Naive thymus-derived CD4-positive, alpha-beta T cell (primary cell): ENCODE measurements at regions of chr7 and their contacts with region 1.

Region 1: DNA sequence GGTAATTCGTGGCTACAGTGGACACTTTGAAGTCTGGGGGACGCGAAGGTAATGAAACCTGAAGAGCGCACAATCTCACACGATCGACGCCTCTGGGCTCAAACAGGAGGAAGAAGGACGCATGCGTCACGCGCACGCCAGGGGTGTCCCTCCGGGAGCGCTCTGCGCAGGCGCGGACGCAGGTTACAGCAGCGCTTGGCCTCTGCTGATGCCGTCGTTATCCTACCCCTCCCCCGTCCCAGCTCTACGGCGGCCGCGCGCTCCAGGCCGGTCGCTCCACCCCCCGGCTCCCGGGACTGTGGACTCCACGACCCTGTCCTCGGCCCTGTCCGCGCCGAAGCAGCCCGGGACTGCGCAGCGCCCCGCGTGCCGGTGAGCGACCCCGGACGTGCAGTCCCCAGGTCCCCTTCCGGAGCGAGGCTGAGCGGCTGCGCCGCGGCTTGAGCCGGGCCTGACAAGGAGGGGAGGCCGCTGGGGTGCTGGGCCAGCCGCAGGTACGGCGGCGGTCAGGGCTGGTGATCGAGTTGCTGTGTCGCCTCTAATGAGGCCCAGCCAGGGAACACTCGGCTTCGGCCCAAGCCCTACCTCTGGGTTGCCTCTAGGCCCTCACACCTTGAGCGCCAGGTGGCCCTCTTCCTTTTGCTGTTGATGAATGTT is at the start of gene TMEM106B:
- DNase-seq: peak; percentile 93 to 97 (median 96)
- ATAC-seq: peak; percentile 94
- H3K4me3 ChIP-seq: peak within 1 kb of the TSS; percentile 78
- H3K4me3 Mint-ChIP-seq: peak within 1 kb of the TSS; percentile 87 to 98 (median 97)
- H3K27ac ChIP-seq: peak within 1 kb of the TSS; percentile 97
- H3K27ac Mint-ChIP-seq: peak within 1 kb of the TSS; percentile 95 to 100 (median 99)
- H3K4me1 ChIP-seq: peaks cover 12 to 22% of the 10 kb centered on the region in 2 donors
- H3K4me1 Mint-ChIP-seq: peaks cover 25 to 56% (median 41%) of the 10 kb centered on the region in 7 donors
- H3K27me3 ChIP-seq: no peaks in the 10 kb centered on the region
- H3K27me3 Mint-ChIP-seq: peaks cover 0 to 35% (median 0%) of the 10 kb centered on the region in 5 donors
- total RNA-seq, gene TMEM106B: 22.8 to 69.2 (median 40.1) TPM

Region 2: DNA sequence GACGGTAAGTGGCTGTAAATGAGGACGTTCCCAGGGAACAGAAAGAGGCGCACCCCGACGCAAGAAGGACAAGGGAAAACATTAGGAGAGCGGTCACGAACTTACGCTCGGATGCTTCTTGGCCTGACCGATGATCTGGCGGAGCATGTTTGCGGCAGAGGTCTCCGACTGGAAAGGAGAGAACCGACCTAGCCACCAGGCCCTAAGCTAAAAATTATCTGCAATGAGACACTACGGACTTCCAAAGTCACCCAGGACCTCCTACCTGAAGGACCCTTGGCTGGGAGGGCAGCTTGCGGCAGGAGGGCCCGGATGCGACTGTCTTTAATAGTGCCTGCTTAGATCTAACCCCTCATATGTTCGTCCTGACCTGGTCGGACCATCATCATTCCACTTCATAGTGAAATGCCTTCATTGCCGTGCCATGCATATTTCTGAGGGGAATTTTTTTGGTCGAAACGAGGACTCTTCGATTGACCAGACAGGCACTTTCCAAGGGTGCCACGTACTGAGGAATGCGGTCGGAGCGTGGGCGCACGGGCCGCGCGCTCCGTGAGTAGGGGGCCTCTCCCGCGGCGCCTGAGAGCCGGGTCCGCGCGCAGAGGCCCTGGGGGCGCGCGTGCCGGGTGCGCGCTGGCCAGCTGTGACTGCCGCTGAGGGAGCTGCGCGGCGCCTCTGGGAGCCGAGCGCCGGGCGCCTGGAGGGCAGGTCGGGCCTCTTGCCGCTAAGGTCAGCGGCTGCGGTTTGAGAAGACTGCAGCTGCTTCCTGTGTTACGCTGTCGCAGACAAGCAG is 1271.1 kb before region 1 on chr7:
- CTCF ChIA-PET with region 1: no interaction called
- POLR2A ChIA-PET with region 1: interaction called, 3 read pairs
- intact Hi-C with region 1: loop called in 1 of 2 experiments (anchors 1 kb)
- DNase-seq: peak; percentile 86 to 95 (median 90)
- ATAC-seq: peak; percentile 94
- H3K4me3 ChIP-seq: peak overlapping the region; percentile 83
- H3K4me3 Mint-ChIP-seq: no peak overlapping the region
- H3K27ac ChIP-seq: peak overlapping the region; percentile 91
- H3K27ac Mint-ChIP-seq: no peak overlapping the region
- H3K4me1 ChIP-seq: peaks cover 0 to 7% of the 10 kb centered on the region in 2 donors
- H3K4me1 Mint-ChIP-seq: peaks cover 8 to 50% (median 32%) of the 10 kb centered on the region in 7 donors
- H3K27me3 ChIP-seq: no peaks in the 10 kb centered on the region
- H3K27me3 Mint-ChIP-seq: no peaks in the 10 kb centered on the region

Region 3: GRCh38 chr7:12174931-12175330 is 36.3 kb before region 1 on chr7:
- CTCF ChIA-PET with region 1: no interaction called
- POLR2A ChIA-PET with region 1: interaction called, 24 read pairs
- intact Hi-C with region 1: loop called (anchors 1 kb)
- DNase-seq: no peak
- ATAC-seq: no peak
- H3K4me3 ChIP-seq: no peak overlapping the region
- H3K4me3 Mint-ChIP-seq: no peak overlapping the region
- H3K27ac ChIP-seq: no peak overlapping the region
- H3K27ac Mint-ChIP-seq: no peak overlapping the region
- H3K4me1 ChIP-seq: peaks cover 11 to 12% of the 10 kb centered on the region in 2 donors
- H3K4me1 Mint-ChIP-seq: peaks cover under 1 to 25% (median 19%) of the 10 kb centered on the region in 7 donors
- H3K27me3 ChIP-seq: no peaks in the 10 kb centered on the region
- H3K27me3 Mint-ChIP-seq: peaks cover 0 to 31% (median 0%) of the 10 kb centered on the region in 5 donors

Region 4: DNA sequence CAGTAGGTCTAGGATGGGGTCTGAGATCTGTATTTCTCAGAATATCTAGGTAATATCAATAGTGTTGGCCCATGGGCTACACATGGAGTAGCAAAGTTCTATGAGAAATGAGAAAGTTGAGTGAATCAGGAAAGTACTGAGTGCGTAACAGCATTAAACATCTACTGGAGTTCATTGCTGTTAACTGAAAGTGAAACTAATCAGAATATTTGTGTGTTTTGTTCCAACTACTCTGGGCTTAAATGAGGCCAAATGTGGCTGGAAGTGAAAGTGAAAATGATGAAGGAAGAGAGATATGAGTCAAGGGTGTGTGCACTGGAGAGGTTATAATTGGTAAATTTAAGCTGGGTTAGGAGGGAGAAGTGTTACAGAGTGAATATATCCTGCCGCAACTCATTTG is 46.4 kb after region 1 on chr7:
- CTCF ChIA-PET with region 1: interaction called, 6 read pairs
- POLR2A ChIA-PET with region 1: interaction called, 20 read pairs
- intact Hi-C with region 1: loop called (anchors 1 kb)
- DNase-seq: peak in 8 of 9 donors; percentile 31 to 80 (median 72)
- ATAC-seq: peak; percentile 97
- H3K4me3 ChIP-seq: peak overlapping the region; percentile 26
- H3K4me3 Mint-ChIP-seq: no peak overlapping the region
- H3K27ac ChIP-seq: peak overlapping the region; percentile 28
- H3K27ac Mint-ChIP-seq: no peak overlapping the region
- H3K4me1 ChIP-seq: peaks cover 23% of the 10 kb centered on the region in 2 donors
- H3K4me1 Mint-ChIP-seq: peaks cover 0 to 12% (median 9%) of the 10 kb centered on the region in 7 donors
- H3K27me3 ChIP-seq: no peaks in the 10 kb centered on the region
- H3K27me3 Mint-ChIP-seq: peaks cover 0 to 3% (median 0%) of the 10 kb centered on the region in 5 donors

Region 5: GRCh38 chr7:12389089-12389700 is 178.0 kb after region 1 on chr7:
- CTCF ChIA-PET with region 1: no interaction called
- POLR2A ChIA-PET with region 1: no interaction called
- intact Hi-C with region 1: loop called in 1 of 2 experiments (anchors 5 kb)
- DNase-seq: peak in 7 of 9 donors; percentile 7 to 47 (median 26)
- ATAC-seq: peak; percentile 81
- H3K4me3 ChIP-seq: no peak overlapping the region
- H3K4me3 Mint-ChIP-seq: no peak overlapping the region
- H3K27ac ChIP-seq: no peak overlapping the region
- H3K27ac Mint-ChIP-seq: no peak overlapping the region
- H3K4me1 ChIP-seq: no peaks in the 10 kb centered on the region
- H3K4me1 Mint-ChIP-seq: no peaks in the 10 kb centered on the region
- H3K27me3 ChIP-seq: no peaks in the 10 kb centered on the region
- H3K27me3 Mint-ChIP-seq: no peaks in the 10 kb centered on the region

Region 6: DNA sequence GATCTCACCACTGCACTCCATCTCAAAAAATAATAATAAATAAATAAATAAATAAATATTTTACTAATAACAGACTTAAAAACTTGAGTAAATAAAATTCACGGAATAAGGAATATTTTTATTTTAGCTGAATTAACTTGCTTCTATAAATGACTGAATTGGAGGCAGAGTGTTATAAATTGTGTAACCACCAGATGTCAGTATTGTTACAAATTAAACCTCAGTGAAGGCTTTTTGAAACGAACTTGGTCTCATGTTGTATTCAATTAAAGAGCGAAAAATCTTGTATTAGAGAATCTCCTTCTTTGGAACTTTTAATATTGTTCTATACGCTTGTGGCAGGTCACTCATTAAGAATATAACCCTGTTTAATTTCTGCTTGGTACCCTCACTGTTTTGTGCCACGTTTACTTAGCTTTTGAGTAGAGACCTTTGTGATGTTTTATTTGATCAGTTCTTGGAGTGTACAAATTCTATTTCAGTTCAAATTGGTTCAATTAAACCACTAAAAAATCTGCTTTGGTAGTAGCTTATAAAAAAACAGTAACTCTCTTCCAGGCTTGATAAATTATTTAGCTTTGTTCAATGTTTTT is 313.7 kb after region 1 on chr7:
- CTCF ChIA-PET with region 1: no interaction called
- POLR2A ChIA-PET with region 1: no interaction called
- intact Hi-C with region 1: no loop called
- DNase-seq: peak in 5 of 9 donors; percentile 10 to 36 (median 24)
- ATAC-seq: peak; percentile 59
- H3K4me3 ChIP-seq: no peak overlapping the region
- H3K4me3 Mint-ChIP-seq: no peak overlapping the region
- H3K27ac ChIP-seq: no peak overlapping the region
- H3K27ac Mint-ChIP-seq: no peak overlapping the region
- H3K4me1 ChIP-seq: no peaks in the 10 kb centered on the region
- H3K4me1 Mint-ChIP-seq: no peaks in the 10 kb centered on the region
- H3K27me3 ChIP-seq: no peaks in the 10 kb centered on the region
- H3K27me3 Mint-ChIP-seq: peaks cover 14 to 60% (median 37%) of the 10 kb centered on the region in 5 donors

Region 7: GRCh38 chr7:12638851-12639467 is 427.8 kb after region 1 on chr7:
- CTCF ChIA-PET with region 1: no interaction called
- POLR2A ChIA-PET with region 1: interaction called, 3 read pairs
- intact Hi-C with region 1: loop called in 1 of 2 experiments (anchors 5 kb)
- DNase-seq: peak in 6 of 9 donors; percentile 26 to 62 (median 54)
- ATAC-seq: peak; percentile 71
- H3K4me3 ChIP-seq: no peak overlapping the region
- H3K4me3 Mint-ChIP-seq: peak overlapping the region in 1 of 10 donors; percentile 50
- H3K27ac ChIP-seq: no peak overlapping the region
- H3K27ac Mint-ChIP-seq: no peak overlapping the region
- H3K4me1 ChIP-seq: peaks cover 0 to 7% of the 10 kb centered on the region in 2 donors
- H3K4me1 Mint-ChIP-seq: peaks cover 11 to 31% (median 23%) of the 10 kb centered on the region in 7 donors
- H3K27me3 ChIP-seq: no peaks in the 10 kb centered on the region
- H3K27me3 Mint-ChIP-seq: peaks cover 0 to 10% (median 0%) of the 10 kb centered on the region in 5 donors